Activated T-helper 1 cell treated with anti-CD3 and anti-CD28 coated beads, Interleukin-12 subunit alpha, Interleukin-12 subunit beta, Interleukin-2, Interleukin-4 antibody, amounts not matched to agents 30 ng/mL and 10 ng/mL and 1 ng/mL, durations not matched to agents 14 hours and 24 hours and 36 hours (primary cell): ENCODE measurements at regions of chr16 and their contacts with region 1.

Region 1: DNA sequence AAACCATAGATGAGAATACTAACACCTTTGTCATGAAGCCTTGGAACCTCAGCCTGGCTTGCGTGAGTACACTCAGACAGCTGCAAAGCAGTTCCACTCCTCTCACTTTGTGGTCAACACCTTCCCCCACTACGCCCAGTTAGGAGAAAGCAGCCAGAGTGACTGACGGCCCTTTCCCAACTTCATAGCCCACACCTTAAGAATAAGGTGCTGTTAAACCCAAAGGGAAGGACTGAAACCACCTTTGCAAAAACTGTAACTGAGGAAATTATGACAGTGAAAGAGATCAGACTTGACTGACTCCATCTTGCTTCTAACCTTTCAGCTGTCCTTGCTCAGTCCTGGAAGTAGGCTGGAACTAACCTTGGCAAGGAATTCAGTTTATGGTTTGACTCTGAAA is 13.7 kb downstream of the N4BP1 start:
- DNase-seq: peak; percentile 54
- H3K4me3 Mint-ChIP-seq: peak overlapping the region; percentile 57
- H3K27ac Mint-ChIP-seq: peak overlapping the region; percentile 90
- H3K4me1 Mint-ChIP-seq: peaks cover 53% of the 10 kb centered on the region
- H3K27me3 Mint-ChIP-seq: no peaks in the 10 kb centered on the region

Region 2: GRCh38 chr16:48565752-48566151 is 30.6 kb before region 1 on chr16:
- intact Hi-C with region 1: loop called (anchors 1 kb)
- DNase-seq: no peak
- H3K4me3 Mint-ChIP-seq: no peak overlapping the region
- H3K27ac Mint-ChIP-seq: peak overlapping the region; percentile 87
- H3K4me1 Mint-ChIP-seq: peaks cover 76% of the 10 kb centered on the region
- H3K27me3 Mint-ChIP-seq: no peaks in the 10 kb centered on the region

Region 3: GRCh38 chr16:48576927-48577326 is 19.4 kb before region 1 on chr16:
- intact Hi-C with region 1: loop called (anchors 1 kb)
- DNase-seq: no peak
- H3K4me3 Mint-ChIP-seq: peak overlapping the region; percentile 38
- H3K27ac Mint-ChIP-seq: peak overlapping the region; percentile 84
- H3K4me1 Mint-ChIP-seq: peaks cover 68% of the 10 kb centered on the region
- H3K27me3 Mint-ChIP-seq: no peaks in the 10 kb centered on the region

Region 4: DNA sequence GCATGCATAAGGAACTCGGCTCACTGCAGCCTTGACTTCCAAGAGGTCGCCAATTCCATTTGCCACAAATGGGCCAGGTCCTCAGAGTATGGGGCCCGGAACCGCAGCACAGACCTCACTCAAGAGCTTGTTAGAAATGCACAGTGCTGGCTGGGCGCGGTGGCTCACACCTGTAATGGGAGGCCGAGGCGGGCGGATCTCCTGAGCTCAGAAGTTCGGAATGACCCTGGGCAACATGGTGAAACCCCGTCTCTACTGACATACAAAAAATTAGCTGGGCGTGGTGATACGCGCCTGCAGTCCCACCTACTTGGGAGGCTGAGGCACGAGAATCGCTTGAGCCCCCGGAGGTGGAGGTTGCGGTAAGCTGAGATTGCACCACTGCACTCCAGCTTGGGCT is 33.2 kb after region 1 on chr16:
- intact Hi-C with region 1: no loop called
- DNase-seq: no peak
- H3K4me3 Mint-ChIP-seq: no peak overlapping the region
- H3K27ac Mint-ChIP-seq: no peak overlapping the region
- H3K4me1 Mint-ChIP-seq: peaks cover 11% of the 10 kb centered on the region
- H3K27me3 Mint-ChIP-seq: peaks cover 15% of the 10 kb centered on the region